ENCODE measurements at regions of chr20 and their contacts with region 1.

Region 1: GRCh38 chr20:4160761-4161305 is 145.5 kb upstream of the RNF24 start:
- DNase-seq: peak; percentile 61 to 72
- H3K4me3 ChIP-seq: peak overlapping the region; percentile 45; the same call in 1 of the 2 replicates
- H3K27ac ChIP-seq: peak overlapping the region; percentile 73
- H3K4me1 ChIP-seq: peaks cover 64% of the 10 kb centered on the region
- H3K27me3 ChIP-seq: no peaks in the 10 kb centered on the region
- CTCF ChIP-seq: no peak

Region 2: GRCh38 chr20:3888622-3889488 is 272.0 kb before region 1 on chr20 and contains the start of gene PANK2:
- CTCF ChIA-PET with region 1: interaction called, 13 read pairs
- POLR2A ChIA-PET with region 1: no interaction called
- intact Hi-C with region 1: no loop called
- DNase-seq: peak; percentile 95 to 99
- H3K4me3 ChIP-seq: peak within 1 kb of the TSS; percentile 71
- H3K27ac ChIP-seq: peak within 1 kb of the TSS; percentile 38
- H3K4me1 ChIP-seq: peaks cover 41% of the 10 kb centered on the region
- H3K27me3 ChIP-seq: no peaks in the 10 kb centered on the region
- CTCF ChIP-seq: no peak; the same call in 1 of the 2 replicates
- total RNA-seq, gene PANK2: 51.6 and 54.5 TPM in 2 replicates

Region 3: GRCh38 chr20:3927486-3928291 is 233.1 kb before region 1 on chr20:
- CTCF ChIA-PET with region 1: no interaction called
- POLR2A ChIA-PET with region 1: interaction called, 18 read pairs
- intact Hi-C with region 1: no loop called
- DNase-seq: no peak
- H3K4me3 ChIP-seq: no peak overlapping the region
- H3K27ac ChIP-seq: peak overlapping the region; percentile 41; the same call in 1 of the 2 replicates
- H3K4me1 ChIP-seq: no peaks in the 10 kb centered on the region
- H3K27me3 ChIP-seq: no peaks in the 10 kb centered on the region
- CTCF ChIP-seq: no peak

Region 4: GRCh38 chr20:4119854-4120209 is 41.0 kb before region 1 on chr20:
- CTCF ChIA-PET with region 1: no interaction called
- POLR2A ChIA-PET with region 1: no interaction called
- intact Hi-C with region 1: loop called (anchors 2 kb)
- DNase-seq: peak in 1 of 2 experiments; percentile 81
- H3K4me3 ChIP-seq: peak overlapping the region; percentile 36; the same call in 1 of the 2 replicates
- H3K27ac ChIP-seq: peak overlapping the region; percentile 94
- H3K4me1 ChIP-seq: peaks cover 39% of the 10 kb centered on the region
- H3K27me3 ChIP-seq: no peaks in the 10 kb centered on the region
- CTCF ChIP-seq: no peak